CD8-positive, alpha-beta T cell (primary cell): ENCODE measurements at regions of chr21 and their contacts with region 1.

Region 1: DNA sequence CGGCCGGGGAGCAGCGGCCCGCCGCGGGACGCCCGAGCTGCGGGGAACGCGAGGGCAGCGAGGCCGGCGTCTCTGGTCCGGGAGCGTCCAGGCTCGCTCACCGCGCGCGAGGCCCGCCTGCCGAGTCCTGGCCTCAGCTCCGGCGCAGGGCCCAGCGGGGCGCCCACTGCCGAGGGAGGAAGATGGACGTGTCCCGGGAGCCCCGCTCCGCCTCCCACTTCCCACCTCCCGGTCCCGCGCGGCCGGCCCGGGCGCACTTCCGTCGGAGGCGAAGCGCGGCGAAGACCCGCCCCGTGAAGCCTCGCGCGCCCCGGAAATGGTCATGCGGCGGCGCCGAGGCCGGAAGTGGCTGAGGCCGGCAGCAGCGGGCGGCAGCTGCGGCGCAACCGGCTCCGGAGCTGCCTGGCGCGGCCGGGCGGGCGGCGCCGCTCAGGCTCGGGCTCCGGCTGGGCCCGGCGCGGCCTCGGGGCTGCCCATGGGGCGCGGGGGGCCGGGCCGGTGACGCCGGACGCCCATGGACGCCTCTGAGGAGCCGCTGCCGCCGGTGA is at the start of gene TRAPPC10:
- DNase-seq: peak; percentile 48 to 91 (median 75)
- ATAC-seq: peak; percentile 53
- H3K4me3 ChIP-seq: peak within 1 kb of the TSS; percentile 63 to 79
- H3K4me3 Mint-ChIP-seq: peak within 1 kb of the TSS; percentile 87
- H3K27ac ChIP-seq: peak within 1 kb of the TSS; percentile 58 to 83
- H3K27ac Mint-ChIP-seq: peak within 1 kb of the TSS; percentile 94
- H3K4me1 ChIP-seq: peaks cover 40% of the 10 kb centered on the region
- H3K4me1 Mint-ChIP-seq: peaks cover 42% of the 10 kb centered on the region
- H3K27me3 ChIP-seq: no peaks in the 10 kb centered on the region
- H3K27me3 Mint-ChIP-seq: no peaks in the 10 kb centered on the region
- CTCF ChIP-seq: no peak
- total RNA-seq, gene TRAPPC10: 128 to 130 TPM

Region 2: DNA sequence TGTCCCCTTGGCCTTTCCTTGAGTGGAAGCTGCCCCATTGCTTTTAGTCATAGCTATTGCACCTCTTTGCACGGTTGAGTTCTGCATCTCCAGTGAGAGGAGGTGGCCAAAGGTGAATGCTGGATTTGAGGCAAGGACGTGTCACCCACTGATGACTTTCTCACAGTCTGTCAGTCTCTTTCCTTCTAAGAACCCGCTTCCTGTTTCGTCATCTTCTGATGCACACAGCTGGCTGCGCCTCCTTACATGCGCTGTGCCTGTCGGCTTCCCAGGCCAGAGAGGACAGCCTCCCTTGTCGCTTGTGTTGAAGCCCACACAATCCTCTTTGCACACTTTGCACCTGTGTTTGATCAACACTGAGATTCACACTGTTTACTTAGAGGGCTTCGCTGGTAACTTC is 53.4 kb after region 1 on chr21:
- CTCF ChIA-PET with region 1: interaction called, 3 read pairs
- POLR2A ChIA-PET with region 1: interaction called, 4 read pairs
- intact Hi-C with region 1: loop called (anchors 1 to 5 kb)
- DNase-seq: peak; percentile 57 to 98 (median 79)
- ATAC-seq: peak; percentile 88
- H3K4me3 ChIP-seq: peak overlapping the region in 1 of 2 experiments; percentile 5
- H3K4me3 Mint-ChIP-seq: peak overlapping the region; percentile 73
- H3K27ac ChIP-seq: peak overlapping the region; percentile 64 to 94
- H3K27ac Mint-ChIP-seq: peak overlapping the region; percentile 96
- H3K4me1 ChIP-seq: peaks cover 24% of the 10 kb centered on the region
- H3K4me1 Mint-ChIP-seq: peaks cover 49% of the 10 kb centered on the region
- H3K27me3 ChIP-seq: no peaks in the 10 kb centered on the region
- H3K27me3 Mint-ChIP-seq: no peaks in the 10 kb centered on the region
- CTCF ChIP-seq: no peak

Region 3: DNA sequence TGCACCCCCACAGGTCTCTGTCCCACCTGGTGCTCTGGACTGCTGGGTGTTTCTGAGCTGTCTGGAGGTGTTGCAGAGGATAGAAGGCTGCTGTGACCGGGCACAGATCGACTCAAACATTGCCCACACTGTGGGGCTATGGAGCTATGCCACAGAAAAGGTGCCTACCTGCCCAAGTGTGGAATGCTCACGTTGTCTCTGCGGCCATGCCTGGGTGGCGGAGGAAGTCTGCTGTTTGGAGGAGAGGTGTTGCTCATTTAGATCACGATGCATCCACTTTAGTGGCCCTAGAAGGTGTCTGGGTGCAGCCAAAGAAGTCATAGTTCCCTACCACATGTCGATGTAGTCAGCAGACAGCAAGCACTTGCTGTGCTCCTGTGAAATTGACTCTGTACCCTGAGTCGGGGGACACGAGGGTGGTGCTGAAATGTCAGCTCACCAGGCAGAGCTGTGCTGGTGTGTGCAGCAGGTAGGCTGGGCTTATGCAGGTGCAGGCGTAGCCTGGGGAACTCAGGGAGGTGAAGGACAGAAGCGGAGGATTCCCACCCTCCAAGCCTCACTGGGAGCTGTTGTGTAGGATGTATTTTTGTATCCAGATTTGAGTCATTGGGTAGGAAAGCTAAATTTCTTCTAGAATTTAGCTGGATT is 62.4 kb after region 1 on chr21:
- CTCF ChIA-PET with region 1: no interaction called
- POLR2A ChIA-PET with region 1: interaction called, 3 read pairs
- intact Hi-C with region 1: loop called in 1 of 2 experiments (anchors 2 kb)
- DNase-seq: peak in 7 of 9 experiments; percentile 27 to 79 (median 62)
- ATAC-seq: peak; percentile 90
- H3K4me3 ChIP-seq: no peak overlapping the region
- H3K4me3 Mint-ChIP-seq: peak overlapping the region; percentile 9
- H3K27ac ChIP-seq: peak overlapping the region in 1 of 2 experiments; percentile 12
- H3K27ac Mint-ChIP-seq: peak overlapping the region; percentile 77
- H3K4me1 ChIP-seq: peaks cover 11% of the 10 kb centered on the region
- H3K4me1 Mint-ChIP-seq: peaks cover 41% of the 10 kb centered on the region
- H3K27me3 ChIP-seq: no peaks in the 10 kb centered on the region
- H3K27me3 Mint-ChIP-seq: no peaks in the 10 kb centered on the region
- CTCF ChIP-seq: no peak

Region 4: GRCh38 chr21:44083631-44084291 is 71.7 kb after region 1 on chr21:
- CTCF ChIA-PET with region 1: interaction called, 9 read pairs
- POLR2A ChIA-PET with region 1: interaction called, 22 read pairs
- intact Hi-C with region 1: loop called (anchors 2 kb)
- DNase-seq: peak; percentile 46 to 94 (median 76)
- ATAC-seq: peak; percentile 76
- H3K4me3 ChIP-seq: peak overlapping the region; percentile 25 to 52
- H3K4me3 Mint-ChIP-seq: peak overlapping the region; percentile 74
- H3K27ac ChIP-seq: peak overlapping the region; percentile 73 to 78
- H3K27ac Mint-ChIP-seq: peak overlapping the region; percentile 95
- H3K4me1 ChIP-seq: peaks cover 85% of the 10 kb centered on the region
- H3K4me1 Mint-ChIP-seq: peaks cover 90% of the 10 kb centered on the region
- H3K27me3 ChIP-seq: no peaks in the 10 kb centered on the region
- H3K27me3 Mint-ChIP-seq: no peaks in the 10 kb centered on the region
- CTCF ChIP-seq: no peak

Region 5: GRCh38 chr21:44299458-44300261 is 287.6 kb after region 1 on chr21 and contains the start of gene PFKL:
- CTCF ChIA-PET with region 1: no interaction called
- POLR2A ChIA-PET with region 1: no interaction called
- intact Hi-C with region 1: loop called in 1 of 2 experiments (anchors 2 kb)
- DNase-seq: peak in 8 of 9 experiments; percentile 38 to 74 (median 56)
- ATAC-seq: peak; percentile 54
- H3K4me3 ChIP-seq: peak within 1 kb of the TSS; percentile 57 to 76
- H3K4me3 Mint-ChIP-seq: peak within 1 kb of the TSS; percentile 89
- H3K27ac ChIP-seq: peak within 1 kb of the TSS; percentile 48 to 55
- H3K27ac Mint-ChIP-seq: peak within 1 kb of the TSS; percentile 95
- H3K4me1 ChIP-seq: peaks cover 66% of the 10 kb centered on the region
- H3K4me1 Mint-ChIP-seq: peaks cover 55% of the 10 kb centered on the region
- H3K27me3 ChIP-seq: no peaks in the 10 kb centered on the region
- H3K27me3 Mint-ChIP-seq: no peaks in the 10 kb centered on the region
- CTCF ChIP-seq: no peak
- total RNA-seq, gene PFKL: 85.1 to 87.8 TPM

Region 6: DNA sequence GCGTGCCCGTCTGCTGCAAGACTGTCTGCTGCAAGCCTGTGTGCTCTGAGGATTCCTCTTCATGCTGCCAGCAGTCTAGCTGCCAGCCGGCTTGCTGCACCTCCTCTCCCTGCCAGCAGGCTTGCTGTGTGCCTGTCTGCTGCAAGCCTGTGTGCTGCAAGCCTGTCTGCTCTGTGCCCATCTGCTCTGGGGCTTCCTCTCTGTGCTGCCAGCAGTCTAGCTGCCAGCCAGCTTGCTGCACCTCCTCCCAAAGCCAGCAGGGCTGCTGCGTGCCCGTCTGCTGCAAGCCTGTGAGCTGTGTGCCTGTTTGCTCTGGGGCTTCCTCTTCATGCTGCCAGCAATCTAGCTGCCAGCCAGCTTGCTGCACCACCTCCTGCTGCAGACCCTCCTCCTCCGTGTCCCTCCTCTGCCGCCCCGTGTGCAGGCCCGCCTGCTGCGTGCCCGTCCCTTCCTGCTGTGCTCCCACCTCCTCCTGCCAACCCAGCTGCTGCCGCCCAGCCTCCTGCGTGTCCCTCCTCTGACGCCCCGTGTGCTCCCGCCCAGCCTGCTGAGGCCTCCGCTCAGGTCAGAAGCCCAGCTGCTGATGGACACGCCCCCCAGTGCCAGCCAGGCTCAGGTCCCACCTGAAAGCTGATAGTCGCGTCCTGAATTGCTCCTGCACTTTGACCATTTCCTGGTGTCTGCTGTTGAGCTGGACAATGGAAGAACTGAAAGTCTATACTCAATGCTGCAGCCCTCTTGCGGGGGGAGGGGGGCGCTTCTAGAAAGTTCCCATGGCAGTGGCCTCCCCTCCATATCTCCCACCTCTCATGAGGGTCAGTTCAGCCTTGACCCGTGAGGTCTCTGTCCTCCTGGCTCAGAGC is 562.6 kb after region 1 on chr21:
- CTCF ChIA-PET with region 1: no interaction called
- POLR2A ChIA-PET with region 1: no interaction called
- intact Hi-C with region 1: no loop called
- DNase-seq: no peak
- ATAC-seq: no peak
- H3K4me3 ChIP-seq: no peak overlapping the region
- H3K4me3 Mint-ChIP-seq: no peak overlapping the region
- H3K27ac ChIP-seq: no peak overlapping the region
- H3K27ac Mint-ChIP-seq: no peak overlapping the region
- H3K4me1 ChIP-seq: no peaks in the 10 kb centered on the region
- H3K4me1 Mint-ChIP-seq: peaks cover 6% of the 10 kb centered on the region
- H3K27me3 ChIP-seq: peaks cover 0 to 2% of the 10 kb centered on the region in 2 experiments
- H3K27me3 Mint-ChIP-seq: peaks cover 2% of the 10 kb centered on the region
- CTCF ChIP-seq: no peak